ENCODE measurements at regions of chr12 and their contacts with region 1.

Region 1: DNA sequence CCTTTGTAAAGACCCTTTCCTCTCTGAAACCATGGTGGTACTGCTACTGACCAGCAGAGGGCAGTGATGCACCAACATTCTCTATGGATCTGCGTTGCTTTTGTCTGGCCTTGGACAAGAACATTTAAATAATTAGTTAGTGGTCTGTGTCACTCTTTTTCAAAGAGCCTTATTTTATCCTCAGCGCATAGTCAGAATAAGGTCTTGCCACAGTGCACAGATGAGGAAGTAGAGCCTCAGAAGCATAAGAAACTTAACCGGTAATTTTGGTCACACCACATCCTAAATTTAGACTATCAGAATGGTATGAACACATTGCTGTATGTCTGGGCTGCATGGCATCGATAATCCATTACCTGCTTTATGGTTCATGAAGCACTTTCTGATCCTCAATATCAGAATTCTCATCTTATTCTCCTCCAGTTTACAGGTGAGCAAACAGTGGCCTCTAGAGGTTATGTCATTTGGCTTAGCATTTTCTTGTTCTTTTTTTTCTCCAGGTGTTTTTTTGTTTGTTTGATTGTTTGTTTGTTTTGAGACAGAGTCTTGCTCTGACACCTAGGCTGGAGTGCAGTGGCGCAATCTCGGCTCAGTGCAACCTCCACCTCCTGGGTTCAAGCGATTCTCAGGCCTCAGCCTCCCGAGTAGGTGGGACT is 23.7 kb upstream of the IFT81 start:
- DNase-seq: peak; percentile 70
- ATAC-seq: peak; percentile 53
- H3K4me3 ChIP-seq: peak overlapping the region; percentile 7 to 24 (median 22); a peak in 5 of 6 replicates
- H3K27ac ChIP-seq: no peak overlapping the region
- H3K4me1 ChIP-seq: peaks cover 62% of the 10 kb centered on the region
- H3K27me3 ChIP-seq: no peaks in the 10 kb centered on the region
- CTCF ChIP-seq: peak; percentile 91
- EP300 ChIP-seq: no peak
- POLR2A ChIP-seq: no peak
- RAD21 ChIP-seq: peak; percentile 85

Region 2: DNA sequence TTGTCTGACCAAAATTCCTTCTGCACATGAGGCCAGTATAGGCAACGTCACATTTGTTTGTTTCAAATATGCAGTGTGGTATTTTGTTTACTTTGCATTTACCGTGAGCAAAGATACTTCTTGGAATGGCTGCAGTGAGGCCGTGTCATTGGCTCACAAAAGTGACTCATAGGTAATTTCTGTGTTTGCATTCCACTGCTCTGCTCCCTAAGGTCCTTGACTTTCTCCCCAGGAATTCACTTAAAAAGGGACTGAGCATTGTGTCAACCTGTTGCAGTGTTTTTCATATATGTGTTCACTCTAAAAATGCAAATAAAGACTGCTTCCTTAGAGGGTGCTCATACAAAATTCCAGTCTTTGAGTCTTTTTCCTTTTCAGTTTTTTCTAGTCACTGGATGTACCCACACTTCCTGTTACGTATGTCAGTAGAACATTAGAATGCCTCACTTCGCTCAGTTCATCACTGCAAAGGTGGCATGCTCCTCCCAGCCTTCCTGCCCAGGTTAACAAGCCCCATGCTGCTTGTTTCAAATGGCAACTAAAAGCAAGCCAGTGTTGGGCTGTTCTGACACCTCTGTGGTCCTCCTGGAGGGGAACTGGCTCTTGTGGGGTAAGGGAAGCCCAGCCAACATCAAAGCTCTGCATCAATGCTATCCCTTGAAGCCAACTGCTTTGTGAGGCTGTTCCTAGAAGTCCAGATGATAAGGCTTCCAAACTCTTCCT is 61.2 kb before region 1 on chr12:
- CTCF ChIA-PET with region 1: interaction called, 11 read pairs
- POLR2A ChIA-PET with region 1: interaction called, 3 read pairs
- in situ Hi-C with region 1: no loop called
- intact Hi-C with region 1: no loop called
- DNase-seq: peak; percentile 99
- ATAC-seq: peak; percentile 88
- H3K4me3 ChIP-seq: peak overlapping the region in 1 of 3 experiments; percentile 34; a peak in 1 of 6 replicates
- H3K27ac ChIP-seq: peak overlapping the region; percentile 96
- H3K4me1 ChIP-seq: peaks cover 95% of the 10 kb centered on the region
- H3K27me3 ChIP-seq: no peaks in the 10 kb centered on the region
- CTCF ChIP-seq: no peak
- EP300 ChIP-seq: peak; percentile 79 to 80; a peak in 2 of 4 replicates
- POLR2A ChIP-seq: peak in 1 of 2 experiments; percentile 44; a peak in 2 of 4 replicates
- RAD21 ChIP-seq: no peak

Region 3: DNA sequence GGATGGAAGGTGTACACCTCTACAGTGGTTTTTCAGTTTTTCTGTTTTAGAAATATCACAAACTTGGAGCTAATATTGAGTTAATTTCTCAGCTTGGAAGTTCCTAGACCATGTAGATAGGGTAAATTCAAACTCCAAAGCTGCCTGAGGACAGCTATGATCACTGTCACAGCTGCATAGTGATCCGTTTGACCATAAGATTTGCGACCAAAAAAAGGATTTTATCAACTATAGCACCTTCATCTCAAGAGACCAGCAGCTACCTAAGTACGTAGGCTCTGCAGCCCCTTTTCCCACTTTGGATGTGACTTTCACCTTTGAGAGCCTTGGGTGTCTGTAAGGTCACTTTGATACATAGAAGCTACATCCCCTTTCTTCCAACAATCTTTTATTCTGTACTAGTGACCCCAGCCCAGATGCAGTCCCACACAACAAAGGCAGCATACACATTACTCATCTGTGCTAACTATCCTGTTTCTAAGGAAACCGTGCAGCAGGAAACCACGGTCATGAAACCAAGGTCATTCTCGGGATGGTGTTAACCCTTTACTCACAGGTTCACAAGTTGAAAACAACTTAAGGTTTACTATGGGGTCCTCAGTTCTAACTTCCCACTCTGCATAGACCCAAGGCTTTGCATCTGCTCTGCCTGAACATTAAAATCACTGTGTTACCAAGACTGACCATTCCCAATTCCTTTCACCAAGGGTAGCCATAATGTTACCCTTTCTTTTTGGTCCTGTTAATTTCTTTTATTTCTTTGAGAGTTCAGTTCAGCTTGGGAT is 99.1 kb after region 1 on chr12:
- CTCF ChIA-PET with region 1: no interaction called
- POLR2A ChIA-PET with region 1: interaction called, 3 read pairs
- in situ Hi-C with region 1: no loop called
- intact Hi-C with region 1: loop called (anchors 10 kb)
- DNase-seq: peak; percentile 88
- ATAC-seq: peak; percentile 98
- H3K4me3 ChIP-seq: peak overlapping the region in 1 of 3 experiments; percentile 47; a peak in 1 of 6 replicates
- H3K27ac ChIP-seq: peak overlapping the region; percentile 95
- H3K4me1 ChIP-seq: peaks cover 28% of the 10 kb centered on the region
- H3K27me3 ChIP-seq: no peaks in the 10 kb centered on the region
- CTCF ChIP-seq: no peak
- EP300 ChIP-seq: peak in 1 of 2 experiments; percentile 59; a peak in 1 of 4 replicates
- POLR2A ChIP-seq: no peak
- RAD21 ChIP-seq: no peak

Region 4: GRCh38 chr12:110280779-110281548 is 180.5 kb after region 1 on chr12 and contains the start of gene ATP2A2:
- CTCF ChIA-PET with region 1: no interaction called
- POLR2A ChIA-PET with region 1: interaction called, 4 read pairs
- in situ Hi-C with region 1: no loop called
- intact Hi-C with region 1: loop called (anchors 5 kb)
- DNase-seq: peak; percentile 73
- ATAC-seq: peak; percentile 83
- H3K4me3 ChIP-seq: peak within 1 kb of the TSS; percentile 73 to 88 (median 73)
- H3K27ac ChIP-seq: peak within 1 kb of the TSS; percentile 92
- H3K4me1 ChIP-seq: peaks cover 63% of the 10 kb centered on the region
- H3K27me3 ChIP-seq: no peaks in the 10 kb centered on the region
- CTCF ChIP-seq: 0 out of 2 replicates have a peak, but pooled peaks have one; percentile 7
- EP300 ChIP-seq: 0 out of 4 replicates have a peak, but pooled peaks of 1 of the 2 experiments have one; percentile 6
- POLR2A ChIP-seq: peak; percentile 76 to 91
- RAD21 ChIP-seq: peak; percentile 38
- total RNA-seq, gene ATP2A2: 79.2 and 85.5 TPM in 2 replicates

Region 5: GRCh38 chr12:110449799-110450497 is 349.5 kb after region 1 on chr12 and contains the start of gene ARPC3:
- CTCF ChIA-PET with region 1: no interaction called
- POLR2A ChIA-PET with region 1: no interaction called
- in situ Hi-C with region 1: loop called (anchors 25 kb)
- intact Hi-C with region 1: no loop called
- DNase-seq: peak; percentile 90
- ATAC-seq: peak; percentile 97
- H3K4me3 ChIP-seq: peak within 1 kb of the TSS; percentile 81 to 98 (median 95)
- H3K27ac ChIP-seq: peak within 1 kb of the TSS; percentile 87
- H3K4me1 ChIP-seq: peaks cover 40% of the 10 kb centered on the region
- H3K27me3 ChIP-seq: no peaks in the 10 kb centered on the region
- CTCF ChIP-seq: peak; percentile 98
- EP300 ChIP-seq: 0 out of 4 replicates have a peak, but pooled peaks have one; percentile 2 to 19
- POLR2A ChIP-seq: peak; percentile 70 to 73
- RAD21 ChIP-seq: peak; percentile 93
- total RNA-seq, gene ARPC3: 234 and 322 TPM in 2 replicates